ENCODE measurements at regions of chr2 and their contacts with region 1.

Region 1: GRCh38 chr2:235779444-235779896 is 285.6 kb downstream of the AGAP1 start:
- DNase-seq: peak; percentile 67
- CTCF ChIP-seq: peak; percentile 89

Region 2: GRCh38 chr2:235793163-235793752 is 13.8 kb after region 1 on chr2:
- CTCF ChIA-PET with region 1: interaction called, 25 read pairs
- POLR2A ChIA-PET with region 1: no interaction called
- DNase-seq: no peak
- CTCF ChIP-seq: peak; percentile 26

Region 3: DNA sequence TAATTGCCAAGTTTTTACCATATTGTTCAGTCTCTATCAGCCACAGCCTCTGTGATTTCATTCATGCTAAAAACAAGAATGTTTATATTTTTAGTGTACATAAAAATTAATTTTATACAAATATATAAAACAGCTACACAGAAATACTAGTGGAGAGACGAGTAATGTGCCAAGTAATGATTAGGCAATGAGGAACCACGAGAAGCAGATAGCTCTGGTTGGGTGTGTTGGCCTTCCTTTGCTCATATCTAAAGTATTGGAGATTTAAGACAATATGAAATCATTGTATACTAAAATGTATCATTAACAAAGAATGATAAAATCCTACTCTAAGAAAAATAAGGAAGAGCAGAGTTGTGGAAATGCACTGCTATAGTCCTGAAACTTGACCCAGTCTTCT is 41.1 kb after region 1 on chr2:
- CTCF ChIA-PET with region 1: no interaction called
- POLR2A ChIA-PET with region 1: no interaction called
- DNase-seq: no peak
- CTCF ChIP-seq: no peak

Region 4: DNA sequence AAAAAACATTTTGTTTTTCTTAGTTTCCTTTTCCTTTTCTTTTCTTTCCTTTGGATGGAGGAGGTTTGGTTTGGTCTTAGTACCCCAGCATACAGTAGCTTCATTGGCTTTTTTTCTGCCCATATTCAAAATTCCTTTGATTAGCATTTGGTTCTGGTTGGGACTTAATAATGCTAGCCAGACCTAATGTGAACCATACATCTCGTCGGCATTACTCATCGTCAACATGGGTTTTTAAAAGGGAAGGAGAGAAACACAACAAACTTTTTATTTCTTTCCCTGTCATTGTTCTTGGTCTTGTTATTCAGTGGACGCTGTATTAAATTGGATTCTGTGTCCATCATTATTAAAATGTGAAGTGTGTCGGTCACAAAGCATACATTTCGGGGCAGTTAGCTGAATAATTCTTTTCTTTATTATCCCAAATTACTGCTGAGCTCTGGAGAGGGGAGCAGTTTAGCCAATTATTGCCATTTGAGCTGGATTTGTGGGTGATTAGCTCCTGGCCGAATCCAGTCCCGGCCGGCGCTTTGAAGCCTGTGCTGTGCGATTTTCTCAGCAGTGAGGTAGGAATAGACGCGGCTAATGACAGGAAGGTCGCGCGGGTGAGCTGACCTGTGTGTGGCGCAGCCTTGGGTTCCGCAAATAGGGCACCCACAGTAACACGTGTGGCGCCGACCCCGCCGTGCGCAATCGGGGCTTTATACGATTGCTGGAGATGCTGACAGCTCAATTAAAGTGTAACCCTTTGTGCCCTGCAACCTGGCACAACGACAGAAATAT is 85.5 kb after region 1 on chr2:
- CTCF ChIA-PET with region 1: no interaction called
- POLR2A ChIA-PET with region 1: no interaction called
- DNase-seq: no peak
- CTCF ChIP-seq: no peak

Region 5: GRCh38 chr2:236168110-236169067 is 388.9 kb after region 1 on chr2 and contains the start of gene GBX2:
- CTCF ChIA-PET with region 1: interaction called, 16 read pairs
- POLR2A ChIA-PET with region 1: no interaction called
- DNase-seq: no peak
- CTCF ChIP-seq: no peak

Region 6: GRCh38 chr2:236180831-236181453 is 401.5 kb after region 1 on chr2:
- CTCF ChIA-PET with region 1: interaction called, 76 read pairs
- POLR2A ChIA-PET with region 1: no interaction called
- DNase-seq: peak; percentile 61
- CTCF ChIP-seq: peak; percentile 59

Region 7: GRCh38 chr2:236430584-236430983 is 651.1 kb after region 1 on chr2:
- CTCF ChIA-PET with region 1: no interaction called
- POLR2A ChIA-PET with region 1: no interaction called
- DNase-seq: no peak
- CTCF ChIP-seq: no peak

Measured in GM10248 (cell line).